ENCODE measurements at regions of chr10 and their contacts with region 1.

Region 1: DNA sequence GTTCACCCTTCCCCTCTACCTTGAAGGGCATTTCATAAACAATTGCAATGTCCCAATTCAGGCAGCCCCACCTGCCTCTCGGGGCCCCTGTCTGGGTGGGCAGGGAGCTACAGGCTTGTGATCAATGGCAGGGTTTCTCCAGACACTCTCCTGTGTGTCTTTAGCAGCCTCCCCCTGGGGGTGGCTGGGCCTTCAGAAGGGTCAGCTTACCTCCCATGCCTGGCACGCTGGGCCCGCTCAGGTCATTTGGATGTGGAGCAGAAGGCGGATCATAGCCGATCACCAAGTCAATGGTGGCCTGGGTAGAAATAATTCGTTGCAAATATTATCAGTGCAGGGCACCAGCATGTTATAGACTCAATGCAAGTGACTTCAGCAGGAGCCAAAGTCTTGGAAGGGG is 56.3 kb downstream of the MYOF start:
- DNase-seq: no peak
- H3K4me3 ChIP-seq: no peak overlapping the region
- H3K4me3 Mint-ChIP-seq: no peak overlapping the region
- H3K27ac ChIP-seq: no peak overlapping the region
- H3K27ac Mint-ChIP-seq: peak overlapping the region in 5 of 7 donors; percentile 62 to 97 (median 72)
- H3K4me1 ChIP-seq: peaks cover 20 to 26% of the 10 kb centered on the region in 2 donors
- H3K4me1 Mint-ChIP-seq: peaks cover 29% of the 10 kb centered on the region
- H3K27me3 ChIP-seq: no peaks in the 10 kb centered on the region
- H3K27me3 Mint-ChIP-seq: no peaks in the 10 kb centered on the region
- CTCF ChIP-seq: no peak

Region 2: GRCh38 chr10:93413252-93413689 is 12.6 kb before region 1 on chr10:
- intact Hi-C with region 1: loop called in 1 of 2 experiments (anchors 2 kb)
- DNase-seq: peak; percentile 74 to 91 (median 88)
- H3K4me3 ChIP-seq: peak overlapping the region in 1 of 3 experiments; percentile 47
- H3K4me3 Mint-ChIP-seq: peak overlapping the region in 1 of 2 donors; percentile 40
- H3K27ac ChIP-seq: peak overlapping the region; percentile 64 to 96
- H3K27ac Mint-ChIP-seq: peak overlapping the region; percentile 76 to 91 (median 88)
- H3K4me1 ChIP-seq: peaks cover 28 to 35% of the 10 kb centered on the region in 2 donors
- H3K4me1 Mint-ChIP-seq: peaks cover 37% of the 10 kb centered on the region
- H3K27me3 ChIP-seq: no peaks in the 10 kb centered on the region
- H3K27me3 Mint-ChIP-seq: peaks cover 2 to 4% (median 3%) of the 10 kb centered on the region in 3 donors
- CTCF ChIP-seq: no peak

Region 3: GRCh38 chr10:93471110-93471651 is 45.3 kb after region 1 on chr10:
- intact Hi-C with region 1: loop called in 1 of 2 experiments (anchors 5 kb)
- DNase-seq: peak; percentile 66 to 88 (median 87)
- H3K4me3 ChIP-seq: no peak overlapping the region
- H3K4me3 Mint-ChIP-seq: no peak overlapping the region
- H3K27ac ChIP-seq: peak overlapping the region; percentile 38 to 71
- H3K27ac Mint-ChIP-seq: peak overlapping the region; percentile 79 to 93 (median 85)
- H3K4me1 ChIP-seq: peaks cover 45 to 63% of the 10 kb centered on the region in 2 donors
- H3K4me1 Mint-ChIP-seq: peaks cover 53% of the 10 kb centered on the region
- H3K27me3 ChIP-seq: no peaks in the 10 kb centered on the region
- H3K27me3 Mint-ChIP-seq: no peaks in the 10 kb centered on the region
- CTCF ChIP-seq: no peak

Measured in CD14-positive monocyte (primary cell).